Mucosa of descending colon (tissue), 3 donors: ENCODE measurements at regions of chr13 and their contacts with region 1.

Region 1: DNA sequence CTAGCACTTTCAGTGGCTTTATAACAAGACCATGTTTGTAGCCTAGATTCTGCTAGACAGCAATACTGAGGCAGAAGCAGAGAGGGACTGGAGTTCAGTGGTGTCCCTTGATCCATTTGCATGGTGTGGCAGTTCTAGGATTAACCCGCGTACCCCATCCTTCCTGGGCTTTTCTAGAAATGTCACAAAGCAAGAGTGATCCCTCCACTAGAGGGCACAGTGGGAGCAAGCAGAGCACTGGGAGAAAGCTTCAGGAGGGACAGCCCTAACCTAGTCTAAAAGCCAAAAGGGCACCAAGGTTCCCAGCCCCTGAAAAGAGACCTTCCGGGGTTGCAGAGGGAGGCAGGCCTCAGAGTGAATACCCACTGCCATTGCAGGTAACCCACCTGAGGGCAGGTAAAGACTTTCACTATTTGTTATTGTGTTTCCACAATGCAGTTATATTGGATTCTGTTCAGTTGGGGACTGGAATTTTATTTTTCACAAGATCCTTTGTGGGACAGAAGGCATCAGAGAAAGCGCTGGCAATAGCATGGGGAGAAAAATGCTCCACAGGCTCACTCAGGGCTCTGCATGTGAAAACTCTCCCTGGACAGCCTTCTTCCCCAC is 170.6 kb downstream of the FLT1 start:
- DNase-seq: peak in 2 of 3 donors; percentile 35 to 85
- ATAC-seq: peak; percentile 83
- H3K4me3 ChIP-seq: no peak overlapping the region
- H3K4me1 ChIP-seq: peaks cover 3% of the 10 kb centered on the region
- CTCF ChIP-seq: peak; percentile 70

Region 2: GRCh38 chr13:28384789-28385188 is 60.5 kb after region 1 on chr13:
- intact Hi-C with region 1: no loop called
- DNase-seq: no peak
- ATAC-seq: no peak
- H3K4me3 ChIP-seq: no peak overlapping the region
- H3K4me1 ChIP-seq: no peaks in the 10 kb centered on the region
- CTCF ChIP-seq: no peak

Region 3: DNA sequence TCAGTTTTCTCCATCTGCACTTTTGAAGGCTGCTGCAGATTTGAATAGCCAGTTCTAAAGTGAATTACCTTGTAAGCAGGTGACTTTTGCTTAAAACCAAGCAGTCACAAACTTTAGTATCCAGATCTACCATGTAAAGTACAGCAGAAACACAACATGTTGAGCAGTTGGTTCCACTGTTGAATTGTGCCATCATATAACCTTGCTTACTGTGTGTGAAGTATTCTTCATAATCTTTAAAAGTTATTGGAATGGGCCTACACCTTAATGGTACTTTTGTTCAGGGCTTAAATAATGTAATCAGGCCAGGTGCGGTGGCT is 472.6 kb after region 1 on chr13:
- intact Hi-C with region 1: loop called in 1 of 2 experiments (anchors 5 kb)
- DNase-seq: no peak
- ATAC-seq: no peak
- H3K4me3 ChIP-seq: no peak overlapping the region
- H3K4me1 ChIP-seq: no peaks in the 10 kb centered on the region
- CTCF ChIP-seq: no peak